Adrenal gland (tissue), 19 donors: ENCODE measurements at regions of chr5 and their contacts with region 1.

Region 1: GRCh38 chr5:68315679-68316271 is 100.2 kb downstream of the PIK3R1 start:
- DNase-seq: no peak
- H3K4me3 ChIP-seq: no peak overlapping the region
- H3K27ac ChIP-seq: no peak overlapping the region
- H3K4me1 ChIP-seq: peaks cover 11 to 12% of the 10 kb centered on the region in 2 donors
- H3K27me3 ChIP-seq: no peaks in the 10 kb centered on the region
- CTCF ChIP-seq: no peak
- POLR2A ChIP-seq: no peak

Region 2: DNA sequence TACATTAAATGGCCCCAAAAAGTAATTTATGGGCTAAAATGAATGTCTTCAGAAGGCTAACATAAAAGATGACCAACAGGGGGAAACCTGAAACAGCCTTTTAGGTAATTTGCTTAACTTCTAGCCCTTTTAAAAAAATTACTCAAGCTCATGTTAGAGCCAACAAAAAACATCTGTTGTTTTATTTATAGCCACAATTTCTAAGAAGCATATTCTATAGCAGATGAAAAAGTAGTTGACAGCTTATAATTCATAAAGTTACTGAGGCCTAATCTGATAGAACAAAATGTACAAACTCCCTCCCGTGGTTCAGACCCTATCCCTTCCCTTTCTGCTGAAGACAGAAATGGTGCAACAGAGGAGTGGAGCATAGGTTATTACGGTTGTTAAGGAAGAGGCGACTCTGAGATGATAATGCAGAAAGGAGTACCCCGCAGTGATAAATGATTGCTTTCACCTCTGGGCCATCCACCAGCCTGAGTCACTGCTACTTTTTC is 54.2 kb before region 1 on chr5:
- intact Hi-C with region 1: no loop called
- DNase-seq: no peak
- H3K4me3 ChIP-seq: no peak overlapping the region
- H3K27ac ChIP-seq: peak overlapping the region in 2 of 5 donors; percentile 26 to 49
- H3K4me1 ChIP-seq: peaks cover 23 to 69% of the 10 kb centered on the region in 2 donors
- H3K27me3 ChIP-seq: no peaks in the 10 kb centered on the region
- CTCF ChIP-seq: peak in 2 of 6 experiments; percentile 18 to 34
- POLR2A ChIP-seq: no peak

Region 3: GRCh38 chr5:68369457-68370125 is 53.8 kb after region 1 on chr5:
- intact Hi-C with region 1: loop called in 1 of 2 experiments (anchors 10 kb)
- DNase-seq: peak in 1 of 7 donors; percentile 21
- H3K4me3 ChIP-seq: no peak overlapping the region
- H3K27ac ChIP-seq: no peak overlapping the region
- H3K4me1 ChIP-seq: peaks cover 0 to 9% of the 10 kb centered on the region in 2 donors
- H3K27me3 ChIP-seq: no peaks in the 10 kb centered on the region
- CTCF ChIP-seq: no peak
- POLR2A ChIP-seq: no peak

Region 4: DNA sequence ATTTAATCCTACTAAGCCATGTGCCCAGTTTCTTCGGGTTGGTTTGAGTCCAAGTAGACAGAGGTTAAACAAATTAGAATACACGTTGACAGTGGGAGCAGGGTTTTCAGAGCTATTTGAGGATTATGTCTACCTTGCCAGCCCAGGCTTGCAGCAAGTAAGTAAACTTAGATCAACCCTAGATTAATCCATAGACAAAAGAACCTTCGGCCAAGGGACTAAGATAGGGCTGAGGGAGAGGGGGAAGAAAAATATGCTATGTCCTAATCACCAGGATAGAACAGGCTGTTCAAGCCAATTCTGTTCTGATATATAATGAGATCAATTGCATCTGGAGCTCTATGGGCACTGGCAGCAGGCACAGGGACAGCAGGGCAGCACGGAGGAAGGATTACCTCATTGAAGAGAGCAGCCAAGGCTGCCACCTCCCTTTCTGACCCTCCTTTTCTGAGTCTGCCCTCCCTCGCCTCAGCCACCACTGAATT is 277.5 kb after region 1 on chr5:
- intact Hi-C with region 1: no loop called
- DNase-seq: peak in 2 of 7 donors; percentile 20 to 84
- H3K4me3 ChIP-seq: no peak overlapping the region
- H3K27ac ChIP-seq: peak overlapping the region in 1 of 5 donors; percentile 18
- H3K4me1 ChIP-seq: no peaks in the 10 kb centered on the region
- H3K27me3 ChIP-seq: no peaks in the 10 kb centered on the region
- CTCF ChIP-seq: no peak
- POLR2A ChIP-seq: no peak